Transverse colon (tissue), 4 donors: ENCODE measurements at regions of chr11 and their contacts with region 1.

Region 1: GRCh38 chr11:35617687-35618496 is at the start of gene FJX1:
- DNase-seq: peak; percentile 17
- H3K4me3 ChIP-seq: peak within 1 kb of the TSS; percentile 44 to 52 (median 48)
- H3K27ac ChIP-seq: peak within 1 kb of the TSS; percentile 53 to 82 (median 72)
- H3K4me1 ChIP-seq: peaks cover 11 to 35% (median 21%) of the 10 kb centered on the region in 4 donors
- H3K27me3 ChIP-seq: peaks cover 82% of the 10 kb centered on the region
- CTCF ChIP-seq: no peak
- EP300 ChIP-seq: no peak
- POLR2A ChIP-seq: no peak
- total RNA-seq, gene FJX1: 0.14 to 2.6 (median 0.64) TPM in 3 of 4 donors, not detected in the other

Region 2: DNA sequence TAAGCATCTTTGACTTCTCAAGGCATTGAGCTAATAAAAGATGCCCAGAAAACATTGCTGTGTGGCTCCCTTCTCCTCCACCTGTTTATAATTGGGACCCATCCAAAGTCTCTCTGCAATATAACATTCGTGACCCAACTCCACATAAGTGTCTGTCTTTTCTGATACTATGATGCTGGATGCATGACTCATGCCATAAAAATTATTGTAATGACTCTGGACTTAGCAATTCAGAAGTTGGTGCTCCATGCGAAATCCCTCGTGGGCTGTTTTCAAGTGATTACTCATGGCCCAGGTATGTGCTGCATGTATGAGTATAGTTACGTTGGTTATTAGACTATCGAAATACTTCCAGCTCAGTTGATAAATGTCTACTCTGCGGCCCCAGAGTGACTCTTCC is 12.0 kb after region 1 on chr11:
- in situ Hi-C with region 1: no loop called
- intact Hi-C with region 1: no loop called
- DNase-seq: no peak
- H3K4me3 ChIP-seq: no peak overlapping the region
- H3K27ac ChIP-seq: no peak overlapping the region
- H3K4me1 ChIP-seq: no peaks in the 10 kb centered on the region
- H3K27me3 ChIP-seq: peaks cover 86% of the 10 kb centered on the region
- CTCF ChIP-seq: no peak
- EP300 ChIP-seq: no peak
- POLR2A ChIP-seq: no peak

Region 3: GRCh38 chr11:35800970-35801953 is 183.4 kb after region 1 on chr11:
- in situ Hi-C with region 1: loop called in 1 of 4 experiments (anchors 25 kb)
- intact Hi-C with region 1: no loop called
- DNase-seq: no peak
- H3K4me3 ChIP-seq: no peak overlapping the region
- H3K27ac ChIP-seq: no peak overlapping the region
- H3K4me1 ChIP-seq: no peaks in the 10 kb centered on the region
- H3K27me3 ChIP-seq: no peaks in the 10 kb centered on the region
- CTCF ChIP-seq: no peak
- EP300 ChIP-seq: no peak
- POLR2A ChIP-seq: no peak

Region 4: DNA sequence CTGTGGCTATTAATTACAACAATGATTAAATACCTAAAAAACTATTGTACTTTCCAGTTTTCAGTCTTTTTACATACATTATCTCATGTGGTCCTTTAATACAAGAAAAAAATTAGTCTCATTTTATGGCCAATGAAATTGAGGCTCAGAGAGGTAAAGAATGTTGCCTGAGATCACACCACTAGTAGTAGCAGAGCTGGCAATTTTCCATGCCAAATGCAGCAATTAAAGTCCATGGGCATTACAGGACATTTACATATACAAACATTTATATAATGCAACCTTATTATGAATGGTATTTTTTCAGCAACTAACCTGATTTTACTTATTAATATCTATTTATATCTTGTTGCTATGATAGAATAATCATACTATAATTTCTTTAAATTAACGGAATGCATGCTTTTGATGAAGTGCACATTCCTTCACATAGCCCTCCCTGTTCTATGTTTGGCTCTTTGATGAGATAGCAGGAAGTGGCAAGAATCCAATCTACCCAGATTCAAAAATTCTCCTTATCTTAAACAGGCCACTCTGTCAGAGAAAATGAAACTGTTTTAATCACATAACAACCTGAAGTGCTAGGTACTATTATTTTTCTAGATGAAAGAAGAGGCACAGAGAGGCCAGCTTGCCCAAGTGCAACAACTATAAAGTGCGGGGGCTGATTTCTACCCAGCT is 205.1 kb after region 1 on chr11:
- in situ Hi-C with region 1: loop called in 3 of 4 experiments (anchors 10 to 25 kb)
- intact Hi-C with region 1: loop called (anchors 5 kb)
- DNase-seq: no peak
- H3K4me3 ChIP-seq: no peak overlapping the region
- H3K27ac ChIP-seq: no peak overlapping the region
- H3K4me1 ChIP-seq: peaks cover 0 to 8% (median 0%) of the 10 kb centered on the region in 4 donors
- H3K27me3 ChIP-seq: no peaks in the 10 kb centered on the region
- CTCF ChIP-seq: no peak
- EP300 ChIP-seq: no peak
- POLR2A ChIP-seq: no peak

Region 5: GRCh38 chr11:36149538-36150242 is 531.8 kb after region 1 on chr11:
- in situ Hi-C with region 1: loop called in 3 of 4 experiments (anchors 25 kb)
- intact Hi-C with region 1: no loop called
- DNase-seq: peak; percentile 24
- H3K4me3 ChIP-seq: no peak overlapping the region
- H3K27ac ChIP-seq: no peak overlapping the region
- H3K4me1 ChIP-seq: peaks cover 0 to 10% (median 3%) of the 10 kb centered on the region in 4 donors
- H3K27me3 ChIP-seq: no peaks in the 10 kb centered on the region
- CTCF ChIP-seq: peak in 2 of 5 experiments; percentile 29 to 31
- EP300 ChIP-seq: no peak
- POLR2A ChIP-seq: no peak

Region 6: GRCh38 chr11:36492724-36493304 is 874.9 kb after region 1 on chr11:
- in situ Hi-C with region 1: loop called in 2 of 4 experiments (anchors 10 to 25 kb)
- intact Hi-C with region 1: no loop called
- DNase-seq: no peak
- H3K4me3 ChIP-seq: no peak overlapping the region
- H3K27ac ChIP-seq: no peak overlapping the region
- H3K4me1 ChIP-seq: no peaks in the 10 kb centered on the region
- H3K27me3 ChIP-seq: no peaks in the 10 kb centered on the region
- CTCF ChIP-seq: peak; percentile 58 to 75 (median 72)
- EP300 ChIP-seq: no peak
- POLR2A ChIP-seq: no peak